Gastrocnemius medialis (tissue), 4 donors: ENCODE measurements at regions of chr6 and their contacts with region 1.

Region 1: GRCh38 chr6:123715006-123715875 is 78.5 kb upstream of the TRDN start:
- DNase-seq: no peak
- ATAC-seq: peak; percentile 58 to 84
- H3K4me3 ChIP-seq: peak overlapping the region in 1 of 4 donors; percentile 7
- H3K27ac ChIP-seq: peak overlapping the region; percentile 3 to 66 (median 55)
- H3K4me1 ChIP-seq: peaks cover 3 to 5% of the 10 kb centered on the region in 2 donors
- H3K27me3 ChIP-seq: no peaks in the 10 kb centered on the region
- CTCF ChIP-seq: peak; percentile 66 to 90 (median 76)
- POLR2A ChIP-seq: no peak

Region 2: GRCh38 chr6:123042401-123042800 is 672.8 kb before region 1 on chr6:
- in situ Hi-C with region 1: no loop called
- intact Hi-C with region 1: no loop called
- DNase-seq: no peak
- ATAC-seq: no peak
- H3K4me3 ChIP-seq: no peak overlapping the region
- H3K27ac ChIP-seq: no peak overlapping the region
- H3K4me1 ChIP-seq: no peaks in the 10 kb centered on the region
- H3K27me3 ChIP-seq: no peaks in the 10 kb centered on the region
- CTCF ChIP-seq: no peak
- POLR2A ChIP-seq: no peak

Region 3: GRCh38 chr6:123393328-123393727 is 321.9 kb before region 1 on chr6:
- in situ Hi-C with region 1: no loop called
- intact Hi-C with region 1: loop called (anchors 1 kb)
- DNase-seq: no peak
- ATAC-seq: no peak
- H3K4me3 ChIP-seq: no peak overlapping the region
- H3K27ac ChIP-seq: peak overlapping the region in 3 of 4 donors; percentile 3 to 41 (median 19)
- H3K4me1 ChIP-seq: peaks cover 4 to 7% of the 10 kb centered on the region in 2 donors
- H3K27me3 ChIP-seq: no peaks in the 10 kb centered on the region
- CTCF ChIP-seq: peak in 4 of 5 experiments; percentile 10 to 36 (median 22)
- POLR2A ChIP-seq: no peak

Region 4: DNA sequence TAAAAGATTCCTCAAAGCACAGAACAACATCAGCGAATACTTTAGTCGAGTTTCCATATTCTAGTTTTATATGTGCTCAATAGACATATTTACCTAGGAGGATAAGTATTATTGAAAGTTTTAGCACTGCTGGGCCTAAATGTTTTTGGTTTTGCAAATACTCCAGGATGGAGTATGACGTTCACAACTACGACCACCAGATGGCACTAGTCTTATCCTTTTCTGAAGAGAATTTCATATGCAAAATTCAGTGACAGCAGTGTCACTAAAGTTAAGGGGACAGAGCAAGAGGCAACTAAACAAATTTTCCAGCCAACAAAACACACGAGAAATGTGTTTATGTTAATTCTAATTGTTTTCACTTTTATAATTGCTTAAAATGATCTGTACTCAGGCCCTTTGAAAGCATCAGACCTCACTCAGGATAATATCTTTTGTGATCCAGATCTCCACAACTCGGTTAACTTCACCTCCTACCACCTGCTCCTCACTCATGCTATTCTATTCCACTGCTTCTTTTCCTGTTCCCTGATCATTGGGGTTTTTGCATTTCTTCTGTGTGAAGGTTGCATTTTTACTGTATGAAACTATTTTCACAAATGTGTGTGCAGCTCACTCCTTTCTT is 299.3 kb before region 1 on chr6:
- in situ Hi-C with region 1: loop called (anchors 5 kb)
- intact Hi-C with region 1: loop called (anchors 1 kb)
- DNase-seq: peak; percentile 26 to 64
- ATAC-seq: peak; percentile 62 to 78
- H3K4me3 ChIP-seq: no peak overlapping the region
- H3K27ac ChIP-seq: peak overlapping the region; percentile 45 to 76 (median 63)
- H3K4me1 ChIP-seq: peaks cover 55 to 87% of the 10 kb centered on the region in 2 donors
- H3K27me3 ChIP-seq: no peaks in the 10 kb centered on the region
- CTCF ChIP-seq: peak; percentile 69 to 83 (median 78)
- POLR2A ChIP-seq: no peak